ENCODE measurements at regions of chr11 and their contacts with region 1.

Region 1: GRCh38 chr11:111601979-111602864 is at the start of gene SIK2:
- DNase-seq: peak; percentile 94
- H3K4me3 ChIP-seq: peak within 1 kb of the TSS; percentile 83 to 96
- H3K27ac ChIP-seq: peak within 1 kb of the TSS; percentile 96 to 98
- H3K4me1 ChIP-seq: no peaks in the 10 kb centered on the region
- H3K27me3 ChIP-seq: no peaks in the 10 kb centered on the region
- CTCF ChIP-seq: peak; percentile 74 to 91 (median 81)
- POLR2A ChIP-seq: peak; percentile 17
- total RNA-seq, gene SIK2: 7.6 to 8.9 TPM

Region 2: DNA sequence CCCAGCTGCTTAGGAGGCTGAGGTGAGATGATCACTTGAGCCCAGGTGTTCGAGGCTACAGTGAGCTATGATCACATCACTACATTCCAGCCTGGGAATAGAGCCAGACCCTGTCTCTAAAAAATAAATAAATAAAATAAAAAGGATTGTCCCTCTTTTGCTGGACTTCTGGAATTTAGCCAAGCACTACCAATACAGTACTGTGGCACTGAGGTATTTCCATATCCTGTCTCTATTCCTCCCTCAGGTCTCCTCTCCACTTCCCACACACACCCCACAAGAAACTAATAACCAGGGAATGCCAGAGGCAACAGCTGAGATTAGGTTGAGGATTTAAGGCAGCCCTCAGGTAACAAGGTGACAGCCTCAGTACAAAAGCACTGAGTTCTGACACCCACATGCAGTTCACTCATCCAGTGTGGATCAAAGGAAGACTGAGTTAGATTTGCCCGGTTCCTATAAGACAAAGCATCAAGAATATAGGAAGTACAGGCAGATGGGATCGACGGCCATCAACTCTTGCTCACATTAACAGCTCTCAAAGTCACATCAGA is 168.4 kb after region 1 on chr11:
- intact Hi-C with region 1: loop called (anchors 5 kb)
- DNase-seq: no peak
- H3K4me3 ChIP-seq: no peak overlapping the region
- H3K27ac ChIP-seq: no peak overlapping the region
- H3K4me1 ChIP-seq: peaks cover 5% of the 10 kb centered on the region
- H3K27me3 ChIP-seq: no peaks in the 10 kb centered on the region
- CTCF ChIP-seq: no peak
- POLR2A ChIP-seq: no peak

Measured in testis (tissue), 5 donors.